CD8-positive, alpha-beta memory T cell (primary cell): ENCODE measurements at regions of chr1 and their contacts with region 1.

Region 1: DNA sequence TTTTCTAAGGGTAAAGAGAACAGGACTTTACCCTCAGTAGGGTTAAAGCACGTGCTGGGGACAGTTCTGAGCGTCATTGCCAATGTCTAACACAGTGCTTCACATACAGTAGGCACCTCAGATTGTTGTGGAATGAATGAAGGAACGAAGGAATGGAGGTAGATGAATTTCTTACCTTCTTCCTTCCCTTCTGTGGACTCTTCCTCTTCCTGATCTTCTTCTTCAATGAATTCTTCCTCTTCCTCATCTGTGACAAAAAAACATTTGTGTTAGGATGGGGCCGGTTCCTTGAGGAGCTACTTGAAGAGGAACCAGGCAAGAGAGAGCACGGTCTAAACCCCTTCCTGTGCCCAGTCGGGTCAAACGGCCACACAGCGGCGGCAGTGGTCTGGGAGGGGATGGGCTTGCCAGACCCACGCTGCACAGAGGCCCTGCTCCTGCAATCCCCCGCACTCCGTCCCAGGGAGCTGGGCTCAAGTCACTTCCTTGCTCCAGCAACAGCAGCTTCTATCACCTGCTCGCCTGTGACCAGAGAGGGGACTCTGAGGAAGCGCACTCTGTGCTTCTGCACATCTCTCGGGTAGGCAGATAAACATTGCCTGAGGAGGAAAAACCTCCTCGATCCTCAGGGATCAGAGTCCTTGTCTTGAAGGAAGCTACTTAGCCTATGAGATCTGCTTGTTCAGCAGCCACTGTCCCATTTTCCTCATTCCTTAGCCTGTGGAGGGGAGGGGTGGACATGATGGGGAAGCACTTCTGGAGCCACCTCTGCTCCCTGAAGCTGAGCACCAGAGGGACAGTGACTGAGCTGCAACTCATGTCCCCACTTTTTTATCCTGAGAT is 8.0 kb upstream of the SLC30A2 start:
- DNase-seq: no peak
- H3K4me3 ChIP-seq: no peak overlapping the region
- H3K4me3 Mint-ChIP-seq: no peak overlapping the region
- H3K27ac ChIP-seq: no peak overlapping the region
- H3K27ac Mint-ChIP-seq: peak overlapping the region in 1 of 8 donors; percentile 14
- H3K4me1 ChIP-seq: no peaks in the 10 kb centered on the region
- H3K4me1 Mint-ChIP-seq: no peaks in the 10 kb centered on the region
- H3K27me3 ChIP-seq: peaks cover 5% of the 10 kb centered on the region
- H3K27me3 Mint-ChIP-seq: peaks cover 26 to 61% of the 10 kb centered on the region in 2 donors

Region 2: GRCh38 chr1:25987951-25988350 is 66.0 kb before region 1 on chr1:
- CTCF ChIA-PET with region 1: no interaction called
- POLR2A ChIA-PET with region 1: no interaction called
- DNase-seq: no peak
- H3K4me3 ChIP-seq: no peak overlapping the region
- H3K4me3 Mint-ChIP-seq: peak overlapping the region in 5 of 7 donors; percentile 29 to 90 (median 71)
- H3K27ac ChIP-seq: no peak overlapping the region
- H3K27ac Mint-ChIP-seq: peak overlapping the region in 5 of 8 donors; percentile 29 to 80 (median 66)
- H3K4me1 ChIP-seq: peaks cover 63% of the 10 kb centered on the region
- H3K4me1 Mint-ChIP-seq: peaks cover 59 to 70% (median 65%) of the 10 kb centered on the region in 3 donors
- H3K27me3 ChIP-seq: no peaks in the 10 kb centered on the region
- H3K27me3 Mint-ChIP-seq: no peaks in the 10 kb centered on the region

Region 3: DNA sequence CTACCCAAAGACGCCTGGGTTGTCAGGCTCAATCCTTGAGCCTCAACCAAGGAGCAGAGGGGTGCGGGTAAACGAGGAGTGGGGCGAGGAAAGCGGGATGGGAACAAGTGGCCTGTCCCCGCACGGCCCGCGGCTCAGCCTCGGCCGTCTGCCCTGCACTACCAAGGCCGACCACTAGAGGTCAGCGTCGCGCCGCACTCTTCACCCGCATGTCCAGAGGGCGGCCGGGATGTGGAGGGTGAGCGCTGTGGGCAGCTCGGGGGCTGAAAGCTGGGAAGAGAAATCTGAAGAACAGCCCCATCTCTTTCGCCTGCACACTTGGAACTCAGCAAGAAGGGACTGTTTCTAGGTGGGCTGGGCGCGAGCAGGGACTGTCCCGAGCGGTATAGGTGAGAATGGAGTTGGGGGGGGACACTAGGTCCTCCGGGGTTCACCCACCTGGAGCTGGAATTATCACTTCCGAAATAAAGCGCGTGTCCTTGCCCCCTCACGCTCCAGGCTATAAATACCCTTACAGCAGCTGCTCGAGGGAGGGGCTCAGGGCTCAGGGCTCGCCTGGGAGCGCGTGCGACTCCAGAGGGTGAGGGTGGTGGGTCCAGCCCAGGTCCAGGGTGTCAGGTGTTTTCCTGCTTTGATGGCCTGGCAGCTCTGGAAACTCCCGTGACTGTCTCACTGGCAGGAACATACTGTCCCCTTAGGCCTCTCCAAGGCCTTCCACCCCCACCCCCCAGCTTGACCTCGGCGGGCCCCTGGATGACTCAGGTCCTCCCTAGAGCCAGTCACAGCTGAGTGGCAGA is 17.8 kb before region 1 on chr1:
- CTCF ChIA-PET with region 1: interaction called, 10 read pairs
- POLR2A ChIA-PET with region 1: no interaction called
- DNase-seq: peak; percentile 65 to 79 (median 70)
- H3K4me3 ChIP-seq: peak overlapping the region; percentile 96
- H3K4me3 Mint-ChIP-seq: peak overlapping the region; percentile 93 to 97 (median 95)
- H3K27ac ChIP-seq: peak overlapping the region; percentile 88
- H3K27ac Mint-ChIP-seq: peak overlapping the region; percentile 80 to 98 (median 92)
- H3K4me1 ChIP-seq: peaks cover 6% of the 10 kb centered on the region
- H3K4me1 Mint-ChIP-seq: peaks cover 6 to 13% (median 12%) of the 10 kb centered on the region in 3 donors
- H3K27me3 ChIP-seq: no peaks in the 10 kb centered on the region
- H3K27me3 Mint-ChIP-seq: peaks cover 0 to 3% of the 10 kb centered on the region in 2 donors

Region 4: DNA sequence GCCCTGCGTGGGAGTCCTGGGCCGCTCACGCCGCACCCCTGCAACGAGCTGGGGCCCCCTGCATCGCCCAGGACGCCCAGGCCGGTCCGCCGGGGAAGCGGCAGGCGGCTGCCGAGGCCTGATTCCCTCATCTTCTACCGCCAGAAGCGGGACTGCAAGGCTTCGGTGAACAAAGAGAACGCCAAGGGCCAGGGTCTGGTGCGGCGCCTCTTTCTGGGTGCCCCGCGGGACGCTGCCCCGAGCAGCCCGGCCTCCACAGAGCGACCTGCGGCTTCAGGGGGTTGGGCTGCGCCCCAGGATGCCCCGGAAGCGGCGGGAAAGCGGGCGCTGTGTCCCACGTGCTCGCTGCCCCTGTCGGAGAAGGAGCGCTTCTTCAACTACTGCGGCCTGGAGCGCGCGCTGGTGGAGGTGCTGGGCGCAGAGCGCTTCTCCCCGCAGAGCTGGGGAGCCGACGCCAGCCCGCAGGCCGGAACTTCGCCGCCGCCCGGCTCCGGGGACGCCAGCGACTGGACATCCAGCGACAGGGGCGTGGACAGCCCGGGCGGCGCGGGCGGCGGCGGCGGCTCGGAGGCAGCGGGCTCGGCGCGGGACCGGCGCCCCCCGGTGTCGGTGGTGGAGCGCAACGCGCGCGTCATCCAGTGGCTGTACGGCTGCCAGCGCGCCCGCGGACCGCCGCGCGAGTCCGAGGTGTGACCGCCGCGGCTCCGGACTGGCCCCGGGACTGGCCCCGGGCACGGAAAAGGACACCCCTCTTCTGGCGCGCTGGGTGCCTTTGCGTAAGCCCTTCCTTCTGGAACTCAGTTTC is 107.7 kb after region 1 on chr1:
- CTCF ChIA-PET with region 1: no interaction called
- POLR2A ChIA-PET with region 1: no interaction called
- DNase-seq: peak in 2 of 5 donors; percentile 35 to 57
- H3K4me3 ChIP-seq: peak overlapping the region; percentile 26
- H3K4me3 Mint-ChIP-seq: peak overlapping the region in 3 of 7 donors; percentile 43 to 62 (median 44)
- H3K27ac ChIP-seq: peak overlapping the region; percentile 16
- H3K27ac Mint-ChIP-seq: no peak overlapping the region
- H3K4me1 ChIP-seq: peaks cover 16% of the 10 kb centered on the region
- H3K4me1 Mint-ChIP-seq: peaks cover 11 to 23% (median 13%) of the 10 kb centered on the region in 3 donors
- H3K27me3 ChIP-seq: peaks cover 13% of the 10 kb centered on the region
- H3K27me3 Mint-ChIP-seq: peaks cover 43 to 46% of the 10 kb centered on the region in 2 donors